Activated T-helper 1 cell treated with anti-CD3 and anti-CD28 coated beads, Interleukin-12 subunit alpha, Interleukin-12 subunit beta, Interleukin-2, Interleukin-4 antibody, amounts not matched to agents 30 ng/mL and 10 ng/mL and 1 ng/mL, durations not matched to agents 14 hours and 24 hours and 36 hours (primary cell): ENCODE measurements at regions of chr21 and their contacts with region 1.

Region 1: DNA sequence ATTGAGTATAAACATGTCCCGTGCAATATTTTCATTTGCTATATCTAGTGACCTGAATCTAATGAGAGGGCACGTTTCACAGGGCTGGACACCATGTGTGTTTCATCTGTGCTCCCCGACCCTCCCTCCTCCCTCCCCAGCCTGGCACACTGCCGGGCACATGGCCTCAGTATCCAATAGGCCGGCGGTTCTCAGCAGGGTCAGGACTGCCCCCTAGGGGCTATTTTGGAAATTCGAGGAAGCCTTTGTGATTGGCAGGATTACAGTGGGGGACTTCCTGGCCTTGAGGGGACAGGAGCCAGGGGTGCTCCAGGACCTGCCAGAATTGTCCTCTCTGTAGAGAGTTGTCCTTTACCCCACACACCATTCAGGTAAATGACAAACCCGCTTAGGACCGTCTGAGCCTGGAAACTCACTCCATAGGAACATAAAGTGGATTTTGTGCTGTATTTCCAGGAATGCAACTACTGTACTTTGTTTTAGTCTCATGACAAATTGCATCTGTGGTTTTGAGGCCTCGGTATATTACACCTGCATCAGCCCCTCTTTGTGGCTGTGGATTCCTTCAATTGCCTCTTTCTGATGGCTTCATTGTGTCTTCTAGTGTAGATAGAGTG is 109.5 kb upstream of the SIM2 start:
- DNase-seq: peak; percentile 8
- H3K4me3 Mint-ChIP-seq: no peak overlapping the region
- H3K27ac Mint-ChIP-seq: no peak overlapping the region
- H3K4me1 Mint-ChIP-seq: no peaks in the 10 kb centered on the region
- H3K27me3 Mint-ChIP-seq: peaks cover 1% of the 10 kb centered on the region

Region 2: DNA sequence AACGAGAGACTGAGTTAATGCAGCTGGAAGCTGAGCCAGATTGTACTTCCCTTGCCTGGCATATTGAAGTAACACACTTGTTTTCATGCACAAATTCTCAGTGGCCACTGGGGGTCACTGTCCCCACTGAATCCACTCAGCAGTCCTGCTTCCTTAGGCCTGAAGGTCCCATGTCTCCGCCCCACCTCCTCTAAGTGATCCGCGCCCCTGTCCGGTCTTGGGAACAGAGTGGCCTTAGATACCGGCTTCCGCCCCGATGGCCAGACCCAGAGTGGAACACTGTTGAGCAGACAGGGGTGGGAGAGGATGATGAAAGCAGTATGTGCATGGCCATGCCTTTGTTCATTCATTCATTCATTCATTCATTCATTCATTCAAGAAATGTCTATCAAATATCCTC is 169.5 kb before region 1 on chr21:
- intact Hi-C with region 1: loop called (anchors 1 kb)
- DNase-seq: peak; percentile 13
- H3K4me3 Mint-ChIP-seq: no peak overlapping the region
- H3K27ac Mint-ChIP-seq: no peak overlapping the region
- H3K4me1 Mint-ChIP-seq: peaks cover 9% of the 10 kb centered on the region
- H3K27me3 Mint-ChIP-seq: no peaks in the 10 kb centered on the region

Region 3: GRCh38 chr21:36504067-36505058 is 85.1 kb before region 1 on chr21:
- intact Hi-C with region 1: loop called (anchors 1 kb)
- DNase-seq: no peak
- H3K4me3 Mint-ChIP-seq: no peak overlapping the region
- H3K27ac Mint-ChIP-seq: no peak overlapping the region
- H3K4me1 Mint-ChIP-seq: no peaks in the 10 kb centered on the region
- H3K27me3 Mint-ChIP-seq: peaks cover 8% of the 10 kb centered on the region